IMR-90 (cell line): ENCODE measurements at regions of chr19 and their contacts with region 1.

Region 1: DNA sequence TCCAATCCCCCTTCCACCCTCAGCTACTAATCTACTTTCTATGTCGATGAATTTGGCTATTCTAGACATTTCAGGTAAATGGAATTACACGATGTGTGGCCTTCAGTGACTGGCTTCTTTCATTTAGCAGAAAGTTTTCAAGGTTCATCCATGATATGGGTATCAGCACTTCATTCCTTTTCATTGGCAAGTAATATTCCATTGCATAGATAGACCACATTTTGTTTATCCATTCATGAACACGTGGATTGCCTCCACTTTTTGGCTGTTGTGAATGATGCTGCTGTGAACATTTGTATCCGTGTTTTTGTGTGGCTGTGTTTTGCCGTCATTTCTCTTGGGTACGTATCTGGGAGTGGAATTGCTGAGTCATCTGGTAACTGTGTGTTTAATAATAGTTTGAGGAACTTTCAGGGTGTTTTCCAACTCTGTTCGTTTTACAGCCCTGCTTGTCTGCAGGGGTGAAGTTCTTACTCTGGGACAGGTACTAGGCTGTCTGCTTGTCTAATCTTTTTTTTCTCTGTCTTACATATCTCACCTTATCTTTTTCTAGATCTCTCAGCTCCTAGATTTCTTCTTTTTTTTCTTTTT is 32.5 kb downstream of the MARK4 start:
- DNase-seq: no peak
- ATAC-seq: no peak
- H3K4me3 ChIP-seq: no peak overlapping the region
- H3K27ac ChIP-seq: no peak overlapping the region
- H3K4me1 ChIP-seq: no peaks in the 10 kb centered on the region
- H3K27me3 ChIP-seq: no peaks in the 10 kb centered on the region
- CTCF ChIP-seq: no peak
- POLR2A ChIP-seq: no peak
- RAD21 ChIP-seq: no peak

Region 2: DNA sequence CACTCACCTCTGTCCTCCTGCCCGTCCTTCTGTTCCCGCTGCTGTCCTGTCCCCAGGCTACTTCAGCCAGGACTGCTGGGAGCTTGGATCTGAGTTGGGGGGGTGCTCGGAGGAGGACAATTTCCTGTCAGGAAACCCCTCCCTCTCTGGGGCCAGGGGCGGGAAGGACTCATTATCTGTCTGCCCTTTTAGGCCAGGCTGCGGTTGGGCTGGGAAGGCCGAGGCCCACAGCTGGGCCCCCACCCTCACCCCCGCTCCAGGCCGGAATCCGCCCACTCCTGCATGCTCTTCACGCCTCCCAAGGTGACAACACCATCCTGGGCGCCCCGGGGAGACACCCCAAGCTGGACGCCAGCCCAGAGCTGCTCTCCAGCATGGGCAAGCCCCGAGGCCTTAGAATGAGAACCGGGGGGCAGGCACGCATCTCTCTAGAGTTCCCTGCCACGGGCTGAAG is 38.2 kb before region 1 on chr19 and contains the start of gene EXOC3L2:
- CTCF ChIA-PET with region 1: interaction called, 13 read pairs
- POLR2A ChIA-PET with region 1: no interaction called
- dilution Hi-C with region 1: no loop called
- in situ Hi-C with region 1: no loop called
- intact Hi-C with region 1: no loop called
- DNase-seq: no peak
- ATAC-seq: no peak
- H3K4me3 ChIP-seq: no peak within 1 kb of the TSS
- H3K27ac ChIP-seq: no peak within 1 kb of the TSS
- H3K4me1 ChIP-seq: peaks cover 1% of the 10 kb centered on the region; the same call in 1 of the 2 replicates
- H3K27me3 ChIP-seq: peaks cover 11% of the 10 kb centered on the region; the same call in 1 of the 2 replicates
- CTCF ChIP-seq: no peak
- POLR2A ChIP-seq: no peak
- RAD21 ChIP-seq: no peak
- total RNA-seq, gene EXOC3L2: not detected in 2 replicates